AG04450 (cell line): ENCODE measurements at regions of chr12 and their contacts with region 1.

Region 1: DNA sequence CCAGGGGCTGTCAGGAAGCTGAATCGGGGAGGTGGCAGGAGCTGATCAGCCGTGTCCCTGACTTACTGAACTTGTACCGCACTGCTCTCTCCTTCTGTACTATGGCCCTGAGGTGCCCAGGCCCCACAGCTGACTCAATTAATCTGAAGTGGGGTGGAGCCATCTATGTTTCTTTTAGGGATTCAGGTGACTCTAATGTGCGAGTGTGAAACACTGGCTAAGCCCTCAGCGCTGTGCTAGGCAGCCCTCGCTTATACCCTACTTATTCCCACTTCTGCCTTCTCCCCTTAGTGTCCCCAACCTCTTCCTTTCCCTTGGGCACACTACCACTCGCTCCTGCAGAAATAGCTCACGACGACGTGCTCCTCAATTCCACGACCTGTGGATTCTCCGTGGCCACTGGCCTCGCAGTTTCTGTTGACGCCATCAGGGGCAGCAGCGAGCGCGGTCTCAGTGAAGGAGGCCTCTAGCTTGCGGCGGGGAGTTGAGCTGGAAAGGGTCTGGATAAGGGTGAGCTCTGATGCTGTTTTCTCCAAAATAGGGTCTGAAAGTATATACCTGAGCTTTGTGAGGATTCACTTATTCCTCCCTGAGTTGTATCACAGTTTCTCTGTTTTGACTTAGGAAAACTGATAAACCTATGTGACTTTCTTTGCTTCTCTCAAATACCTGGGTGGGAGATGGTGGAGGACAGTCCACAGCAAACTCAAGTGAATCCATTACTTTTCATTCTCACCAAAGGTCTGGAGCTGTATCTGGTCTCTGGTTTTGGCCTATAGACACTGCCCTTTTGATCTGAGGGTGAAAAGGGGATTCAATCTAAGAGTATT is 167.6 kb downstream of the SLC41A2 start:
- DNase-seq: no peak
- H3K4me3 ChIP-seq: no peak overlapping the region
- H3K27ac ChIP-seq: no peak overlapping the region
- H3K27me3 ChIP-seq: peaks cover 11% of the 10 kb centered on the region
- CTCF ChIP-seq: peak; percentile 76

Region 2: DNA sequence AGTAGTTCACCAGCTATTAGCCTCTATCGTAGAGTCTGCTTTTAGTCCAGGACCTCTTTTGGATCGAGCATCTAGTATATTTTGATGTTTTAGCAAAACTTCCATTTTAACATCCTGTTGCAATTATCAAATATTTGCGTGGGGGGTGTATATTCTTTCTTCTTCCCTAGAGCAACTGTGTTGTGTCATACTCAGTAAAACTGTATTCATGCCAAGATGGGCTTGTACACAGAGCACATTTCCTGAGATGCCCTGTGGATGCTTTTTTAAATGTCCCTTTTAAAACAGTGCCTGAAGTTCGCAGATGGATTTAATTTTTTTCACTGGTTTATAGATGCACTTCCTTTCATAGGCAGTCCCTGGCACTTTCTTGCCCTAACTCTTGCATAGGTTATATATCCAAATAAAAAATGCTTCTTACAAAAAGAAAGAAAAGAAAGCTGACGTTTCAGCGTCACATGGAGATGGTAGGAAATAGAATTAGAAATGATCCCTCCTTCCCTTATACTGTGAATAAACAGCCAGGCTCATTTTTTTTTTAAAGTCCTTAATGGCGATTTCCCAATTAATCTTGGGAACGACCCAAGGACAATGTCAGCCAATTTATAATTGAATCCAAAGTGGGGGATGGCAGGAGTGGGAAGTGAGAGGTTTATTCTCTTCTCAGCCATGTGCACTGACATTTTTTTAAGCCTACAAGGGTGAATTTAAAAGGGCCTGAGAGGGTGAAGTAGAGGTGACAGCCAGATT is 79.4 kb before region 1 on chr12:
- CTCF ChIA-PET with region 1: no interaction called
- POLR2A ChIA-PET with region 1: no interaction called
- DNase-seq: peak; percentile 34
- H3K4me3 ChIP-seq: no peak overlapping the region
- H3K27ac ChIP-seq: peak overlapping the region; percentile 11
- H3K27me3 ChIP-seq: peaks cover 2% of the 10 kb centered on the region
- CTCF ChIP-seq: no peak

Region 3: DNA sequence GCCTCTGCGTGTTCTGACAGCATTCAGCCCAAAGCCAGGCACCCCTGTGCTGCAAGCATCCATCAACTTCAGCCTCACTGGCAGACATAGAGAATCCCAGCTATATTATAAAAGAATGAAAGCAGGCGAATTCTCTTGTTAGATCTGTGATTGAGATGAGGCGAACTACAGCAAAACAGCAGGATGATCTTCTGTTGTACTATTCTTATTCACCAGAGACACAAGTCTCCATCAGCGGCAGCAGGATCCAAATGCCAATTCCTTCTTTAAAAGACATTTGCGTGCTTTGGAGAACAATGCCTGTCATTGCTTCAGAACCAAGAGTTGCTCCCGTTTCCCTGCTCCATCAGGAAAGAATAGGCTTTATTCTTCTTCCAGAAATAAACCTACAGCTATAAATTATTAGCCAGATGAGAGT is 21.4 kb before region 1 on chr12:
- CTCF ChIA-PET with region 1: interaction called, 11 read pairs
- POLR2A ChIA-PET with region 1: no interaction called
- DNase-seq: no peak
- H3K4me3 ChIP-seq: no peak overlapping the region
- H3K27ac ChIP-seq: no peak overlapping the region
- H3K27me3 ChIP-seq: peaks cover 19% of the 10 kb centered on the region
- CTCF ChIP-seq: no peak

Region 4: GRCh38 chr12:104802198-104802597 is 11.7 kb after region 1 on chr12:
- CTCF ChIA-PET with region 1: interaction called, 14 read pairs
- POLR2A ChIA-PET with region 1: interaction called, 5 read pairs
- DNase-seq: no peak
- H3K4me3 ChIP-seq: no peak overlapping the region
- H3K27ac ChIP-seq: no peak overlapping the region
- H3K27me3 ChIP-seq: peaks cover 3% of the 10 kb centered on the region
- CTCF ChIP-seq: no peak